HCT116 (cell line): ENCODE measurements at regions of chr3 and their contacts with region 1.

Region 1: GRCh38 chr3:11662402-11662990 is 18.8 kb upstream of the VGLL4 start:
- DNase-seq: peak; percentile 42
- ATAC-seq: peak; percentile 94
- H3K4me3 ChIP-seq: no peak overlapping the region
- H3K27ac ChIP-seq: no peak overlapping the region
- H3K4me1 ChIP-seq: peaks cover 0 to 4% of the 10 kb centered on the region in 2 experiments; a peak in 2 of 4 replicates
- H3K27me3 ChIP-seq: no peaks in the 10 kb centered on the region
- CTCF ChIP-seq: peak; percentile 57 to 78 (median 71); a peak in 5 of 6 replicates
- POLR2A ChIP-seq: no peak
- RAD21 ChIP-seq: peak; percentile 63

Region 2: GRCh38 chr3:11803977-11804892 is 141.7 kb after region 1 on chr3:
- CTCF ChIA-PET with region 1: interaction called, 7 read pairs
- POLR2A ChIA-PET with region 1: no interaction called
- RAD21 ChIA-PET with region 1: no interaction called
- intact Hi-C with region 1: loop called (anchors 2 kb)
- DNase-seq: peak; percentile 35
- ATAC-seq: peak; percentile 88
- H3K4me3 ChIP-seq: no peak overlapping the region
- H3K27ac ChIP-seq: no peak overlapping the region
- H3K4me1 ChIP-seq: no peaks in the 10 kb centered on the region
- H3K27me3 ChIP-seq: no peaks in the 10 kb centered on the region
- CTCF ChIP-seq: peak; percentile 70 to 78 (median 72)
- POLR2A ChIP-seq: no peak
- RAD21 ChIP-seq: peak; percentile 82

Region 3: DNA sequence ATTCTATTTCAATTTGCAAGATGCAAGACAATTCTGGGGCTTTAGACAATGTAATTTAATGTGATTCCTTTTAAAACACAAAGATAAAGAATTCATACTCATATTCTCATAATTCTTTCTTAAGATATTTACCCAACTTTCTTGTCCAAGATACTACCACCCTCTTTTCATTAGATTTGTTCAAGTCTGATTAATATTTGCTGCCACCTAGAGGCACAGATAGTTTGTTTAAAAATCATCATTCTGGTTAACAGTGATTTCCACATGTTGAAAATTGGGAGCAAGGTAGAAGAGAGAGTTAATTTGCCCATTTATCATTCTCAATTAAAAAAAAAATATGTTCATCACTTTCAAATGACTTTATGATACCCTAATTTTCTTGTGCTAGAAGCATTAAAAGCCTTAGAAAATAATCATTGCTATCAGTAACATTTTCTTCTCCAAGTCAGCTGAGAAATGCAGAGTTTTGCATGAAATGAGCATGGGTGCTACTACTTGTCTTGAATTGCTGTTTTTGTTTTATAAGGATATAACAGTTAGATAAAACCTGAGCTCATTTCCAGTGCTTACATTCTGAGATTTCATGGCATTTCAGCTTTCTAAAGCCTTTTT is 172.6 kb after region 1 on chr3:
- CTCF ChIA-PET with region 1: interaction called, 3 read pairs
- POLR2A ChIA-PET with region 1: no interaction called
- RAD21 ChIA-PET with region 1: no interaction called
- intact Hi-C with region 1: loop called (anchors 5 kb)
- DNase-seq: no peak
- ATAC-seq: no peak; the same call in 1 of the 2 replicates
- H3K4me3 ChIP-seq: no peak overlapping the region
- H3K27ac ChIP-seq: no peak overlapping the region
- H3K4me1 ChIP-seq: no peaks in the 10 kb centered on the region
- H3K27me3 ChIP-seq: no peaks in the 10 kb centered on the region
- CTCF ChIP-seq: peak; percentile 33 to 61 (median 45); a peak in 5 of 6 replicates
- POLR2A ChIP-seq: no peak
- RAD21 ChIP-seq: peak; percentile 68

Region 4: GRCh38 chr3:12004741-12005513 is 342.4 kb after region 1 on chr3:
- CTCF ChIA-PET with region 1: no interaction called
- POLR2A ChIA-PET with region 1: no interaction called
- RAD21 ChIA-PET with region 1: no interaction called
- intact Hi-C with region 1: no loop called
- DNase-seq: no peak
- ATAC-seq: peak; percentile 29; the same call in 1 of the 2 replicates
- H3K4me3 ChIP-seq: peak overlapping the region; percentile 52 to 65
- H3K27ac ChIP-seq: no peak overlapping the region; the same call in 1 of the 2 replicates
- H3K4me1 ChIP-seq: peaks cover 10 to 22% of the 10 kb centered on the region in 2 experiments
- H3K27me3 ChIP-seq: no peaks in the 10 kb centered on the region
- CTCF ChIP-seq: no peak
- POLR2A ChIP-seq: no peak
- RAD21 ChIP-seq: no peak

Region 5: GRCh38 chr3:12046406-12046805 is 383.9 kb after region 1 on chr3:
- CTCF ChIA-PET with region 1: no interaction called
- POLR2A ChIA-PET with region 1: no interaction called
- RAD21 ChIA-PET with region 1: no interaction called
- intact Hi-C with region 1: loop called (anchors 5 kb)
- DNase-seq: peak; percentile 16
- ATAC-seq: peak; percentile 52
- H3K4me3 ChIP-seq: no peak overlapping the region
- H3K27ac ChIP-seq: no peak overlapping the region
- H3K4me1 ChIP-seq: no peaks in the 10 kb centered on the region
- H3K27me3 ChIP-seq: no peaks in the 10 kb centered on the region; the same call in 1 of the 2 replicates
- CTCF ChIP-seq: peak; percentile 56 to 60 (median 57); a peak in 5 of 6 replicates
- POLR2A ChIP-seq: no peak
- RAD21 ChIP-seq: peak; percentile 70